Dorsolateral prefrontal cortex (tissue), 120 donors: ENCODE measurements at regions of chr6 and their contacts with region 1.

Region 1: GRCh38 chr6:166275714-166276166 is 32.5 kb downstream of the PRR18 start:
- DNase-seq: peak in 9 of 10 donors; percentile 59 to 88 (median 71)
- H3K4me3 ChIP-seq: peak overlapping the region in 48 of 59 donors; percentile 2 to 57 (median 38)
- H3K27ac ChIP-seq: peak overlapping the region in 38 of 59 donors; percentile 14 to 90 (median 78)
- H3K27me3 ChIP-seq: peaks cover 0 to 4% (median 0%) of the 10 kb centered on the region in 45 donors
- CTCF ChIP-seq: peak; percentile 86 to 100 (median 99)

Region 2: DNA sequence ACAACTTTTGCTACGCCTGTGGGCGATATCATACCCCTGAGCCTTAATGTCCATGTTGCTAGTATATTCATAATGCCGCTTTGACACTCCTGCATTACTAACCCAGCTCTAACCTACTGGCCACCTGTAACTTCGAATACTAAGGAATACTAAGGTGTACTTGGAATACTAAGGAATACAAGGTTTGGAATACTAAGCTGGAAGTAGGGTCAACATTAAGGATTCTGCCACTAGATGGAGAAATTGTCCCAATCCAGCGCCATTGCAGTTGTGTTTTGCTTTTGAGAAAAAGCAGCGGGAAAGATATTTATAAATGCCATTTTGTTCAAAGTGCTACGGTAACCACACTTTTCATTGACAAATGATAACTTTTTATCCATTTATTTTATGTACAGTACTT is 118.8 kb before region 1 on chr6:
- intact Hi-C with region 1: loop called in 1 of 2 experiments (anchors 5 kb)
- DNase-seq: no peak
- H3K4me3 ChIP-seq: no peak overlapping the region
- H3K27ac ChIP-seq: no peak overlapping the region
- H3K27me3 ChIP-seq: peaks cover 0 to 17% (median 2%) of the 10 kb centered on the region in 45 donors
- CTCF ChIP-seq: peak in 54 of 56 donors; percentile 23 to 75 (median 57)

Region 3: DNA sequence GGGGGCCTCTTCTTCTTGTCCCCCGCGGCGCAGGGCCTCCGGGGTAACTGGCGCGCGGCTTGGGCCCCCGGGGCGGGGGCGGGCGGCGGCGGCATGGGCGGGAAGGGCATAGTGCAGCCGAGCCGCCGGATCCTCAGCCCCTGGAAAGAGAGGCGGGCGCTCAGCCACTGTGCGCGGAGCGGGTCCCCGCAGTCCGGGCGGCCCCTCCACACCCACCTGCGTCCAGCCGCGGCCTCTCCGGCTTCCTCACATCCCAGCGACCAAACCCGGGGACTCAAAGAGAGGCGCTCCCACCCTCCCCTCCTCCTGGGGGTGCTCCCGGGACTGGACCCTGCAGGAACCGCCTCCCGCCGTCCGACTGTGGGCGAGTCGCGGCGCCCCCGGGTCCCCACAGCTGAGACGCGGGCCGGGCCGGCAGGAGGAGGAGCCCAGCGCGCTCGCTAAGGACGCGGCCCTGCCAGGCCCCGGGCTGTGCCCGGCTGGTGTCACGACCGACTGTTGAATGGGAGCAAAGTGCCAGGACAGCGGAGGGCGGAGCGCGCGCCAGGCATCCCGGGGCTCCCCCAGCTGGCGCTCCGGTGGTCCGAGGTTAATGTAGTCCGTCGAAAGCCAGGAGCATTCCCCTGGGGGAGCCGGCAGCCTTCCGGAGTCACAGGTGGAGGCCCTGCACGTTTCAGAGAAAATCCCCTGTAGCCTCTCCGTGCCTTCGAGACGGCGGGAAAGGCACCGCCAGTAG is 32.5 kb after region 1 on chr6 and contains the start of gene PRR18:
- intact Hi-C with region 1: loop called in 1 of 2 experiments (anchors 2 kb)
- DNase-seq: peak; percentile 29 to 87 (median 81)
- H3K4me3 ChIP-seq: peak within 1 kb of the TSS; percentile 31 to 80 (median 64)
- H3K27ac ChIP-seq: peak within 1 kb of the TSS; percentile 49 to 100 (median 95)
- H3K27me3 ChIP-seq: peaks cover 0 to 42% (median 20%) of the 10 kb centered on the region in 45 donors
- CTCF ChIP-seq: peak in 42 of 56 donors; percentile 11 to 61 (median 41)
- total RNA-seq, gene PRR18: 7.1 to 260 (median 51.2) TPM

Region 4: DNA sequence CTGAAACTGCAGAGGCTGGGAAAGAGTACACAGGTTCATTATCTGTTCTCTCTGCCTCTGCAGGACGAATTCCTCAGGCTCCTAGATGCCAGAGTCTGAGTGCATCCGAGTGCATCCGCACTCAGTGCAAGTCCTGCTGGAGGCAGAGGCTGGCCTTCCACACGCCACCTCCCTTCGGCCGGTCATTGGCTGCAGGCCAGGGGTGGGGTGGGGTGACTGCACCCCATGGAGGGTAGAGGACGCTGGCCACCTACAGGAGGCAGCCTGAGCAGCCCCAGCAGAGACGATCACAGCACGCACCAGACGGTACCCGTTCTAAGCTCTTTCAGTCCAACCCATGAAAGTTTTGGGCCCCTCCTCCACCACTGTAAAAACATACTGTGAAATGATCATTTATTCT is 54.9 kb after region 1 on chr6:
- intact Hi-C with region 1: no loop called
- DNase-seq: peak; percentile 36 to 86 (median 82)
- H3K4me3 ChIP-seq: peak overlapping the region in 20 of 59 donors; percentile 1 to 44 (median 19)
- H3K27ac ChIP-seq: peak overlapping the region in 55 of 59 donors; percentile 29 to 93 (median 81)
- H3K27me3 ChIP-seq: no peaks in the 10 kb centered on the region
- CTCF ChIP-seq: peak in 50 of 56 donors; percentile 6 to 71 (median 51)

Region 5: GRCh38 chr6:166342349-166343149 is 66.8 kb after region 1 on chr6 and contains the start of gene SFT2D1:
- intact Hi-C with region 1: loop called in 1 of 2 experiments (anchors 5 kb)
- DNase-seq: peak; percentile 72 to 91 (median 81)
- H3K4me3 ChIP-seq: peak within 1 kb of the TSS; percentile 63 to 100 (median 96)
- H3K27ac ChIP-seq: peak within 1 kb of the TSS; percentile 12 to 98 (median 90)
- H3K27me3 ChIP-seq: no peaks in the 10 kb centered on the region
- CTCF ChIP-seq: peak in 14 of 56 donors; percentile 6 to 30 (median 21)
- total RNA-seq, gene SFT2D1: 32.7 to 79.7 (median 45.4) TPM

Region 6: DNA sequence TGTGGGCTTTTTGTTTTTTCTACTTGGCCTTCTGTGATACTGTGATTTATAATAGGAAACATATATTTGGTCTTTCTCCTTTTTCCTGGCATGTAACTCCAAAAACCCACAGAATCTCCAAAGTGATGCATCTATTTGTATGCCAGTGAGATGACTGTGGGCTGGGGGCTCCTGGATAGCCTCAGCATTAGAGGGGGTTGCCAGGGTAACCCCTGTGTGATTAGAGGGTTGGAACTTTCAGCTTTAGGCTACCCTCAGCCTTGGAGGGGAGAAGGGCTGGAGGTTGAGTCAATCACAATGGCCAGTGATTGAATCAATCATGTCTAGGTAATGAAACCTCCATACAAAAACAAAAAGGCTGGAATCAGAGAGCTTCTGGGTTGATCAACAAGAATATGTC is 77.2 kb after region 1 on chr6:
- intact Hi-C with region 1: no loop called
- DNase-seq: no peak
- H3K4me3 ChIP-seq: no peak overlapping the region
- H3K27ac ChIP-seq: no peak overlapping the region
- H3K27me3 ChIP-seq: peaks cover 0 to 3% (median 0%) of the 10 kb centered on the region in 45 donors
- CTCF ChIP-seq: no peak

Region 7: GRCh38 chr6:166382933-166383801 is 107.4 kb after region 1 on chr6 and contains the start of gene MPC1:
- intact Hi-C with region 1: loop called (anchors 1 to 2 kb)
- DNase-seq: peak; percentile 88 to 99 (median 95)
- H3K4me3 ChIP-seq: peak within 1 kb of the TSS; percentile 73 to 99 (median 92)
- H3K27ac ChIP-seq: peak within 1 kb of the TSS; percentile 67 to 98 (median 94)
- H3K27me3 ChIP-seq: no peaks in the 10 kb centered on the region
- CTCF ChIP-seq: peak in 30 of 56 donors; percentile 10 to 64 (median 28)
- total RNA-seq, gene MPC1: 59.1 to 146 (median 85.0) TPM

Region 8: DNA sequence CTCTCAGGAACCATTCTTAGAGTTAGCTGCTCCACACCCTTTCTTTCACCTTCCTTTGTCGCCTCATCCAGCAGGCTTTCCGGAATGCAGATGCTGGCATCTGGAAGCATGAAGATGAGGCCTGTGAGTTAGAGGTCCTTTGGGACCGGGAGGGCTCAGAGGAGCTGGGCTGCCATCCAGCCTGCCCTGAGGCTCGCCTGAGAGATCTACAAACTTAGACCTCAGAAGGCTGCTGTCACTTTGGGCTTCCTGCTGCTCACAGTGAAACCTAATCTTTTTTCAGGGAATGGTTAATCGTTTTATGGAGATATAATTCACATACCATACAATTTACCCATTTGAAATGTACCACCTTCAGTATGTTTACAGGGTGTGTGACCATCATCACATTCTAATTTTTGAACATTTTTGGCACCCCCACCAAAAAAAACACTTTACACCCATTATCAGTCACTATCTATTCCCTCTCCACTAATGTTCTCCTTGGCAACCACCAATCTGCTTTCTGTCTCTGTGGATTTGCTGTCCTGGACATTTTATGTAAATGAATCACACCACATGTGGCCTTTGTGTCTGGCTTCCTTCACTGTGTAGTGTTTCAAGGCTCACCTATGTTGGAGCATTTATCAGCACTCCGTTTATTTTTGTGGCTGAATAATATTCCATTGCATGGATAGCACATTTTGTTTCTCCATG is 127.0 kb after region 1 on chr6:
- intact Hi-C with region 1: loop called (anchors 2 to 5 kb)
- DNase-seq: peak in 1 of 10 donors; percentile 1
- H3K4me3 ChIP-seq: no peak overlapping the region
- H3K27ac ChIP-seq: no peak overlapping the region
- H3K27me3 ChIP-seq: no peaks in the 10 kb centered on the region
- CTCF ChIP-seq: no peak

Region 9: DNA sequence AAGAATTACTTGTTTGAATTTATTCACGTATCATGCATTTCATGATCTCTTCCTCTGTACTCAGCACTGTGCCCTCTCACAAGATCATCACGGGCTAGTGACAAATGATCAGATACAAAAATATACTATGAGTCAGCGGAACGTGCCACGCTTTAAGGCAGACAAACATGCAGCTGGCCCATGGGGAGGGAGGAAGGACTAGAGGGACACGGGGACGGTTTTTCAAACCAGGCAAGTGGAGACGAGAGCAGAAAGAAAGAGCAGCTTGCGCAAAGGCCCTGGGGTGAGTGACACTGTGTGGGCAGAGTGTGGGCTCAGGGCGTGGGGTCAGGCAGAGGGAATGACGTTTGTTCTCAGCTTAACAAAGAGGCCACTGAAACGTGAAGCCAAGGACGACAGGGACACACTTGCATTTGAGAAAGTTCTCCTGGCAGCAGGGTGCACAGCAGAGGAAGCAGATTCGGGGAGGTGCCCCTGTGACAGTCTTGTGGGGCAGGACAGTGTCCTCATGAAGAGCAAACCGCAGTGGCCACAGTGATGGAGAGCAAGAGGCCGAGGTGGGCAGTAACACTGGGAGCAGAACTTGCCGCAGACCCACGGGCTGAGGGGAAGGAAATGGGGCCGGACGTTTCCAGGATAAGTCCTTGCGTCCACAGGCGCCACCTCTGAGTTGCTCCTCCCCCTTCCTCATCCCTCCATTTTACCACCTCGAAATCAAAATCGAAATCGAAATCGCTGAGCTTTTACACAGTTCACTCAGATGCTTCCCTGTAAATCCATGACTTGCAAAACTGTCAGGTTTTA is 358.2 kb after region 1 on chr6:
- intact Hi-C with region 1: loop called in 1 of 2 experiments (anchors 10 kb)
- DNase-seq: no peak
- H3K4me3 ChIP-seq: no peak overlapping the region
- H3K27ac ChIP-seq: no peak overlapping the region
- H3K27me3 ChIP-seq: no peaks in the 10 kb centered on the region
- CTCF ChIP-seq: no peak